CD14-positive monocyte (primary cell): ENCODE measurements at regions of chr1 and their contacts with region 1.

Region 1: GRCh38 chr1:66331657-66332547 is 202.1 kb upstream of the SGIP1 start:
- DNase-seq: peak; percentile 86 to 98 (median 96)
- H3K4me3 ChIP-seq: peak overlapping the region; percentile 80 to 99 (median 99)
- H3K4me3 Mint-ChIP-seq: peak overlapping the region; percentile 97 to 98
- H3K27ac ChIP-seq: peak overlapping the region; percentile 77 to 86
- H3K27ac Mint-ChIP-seq: peak overlapping the region; percentile 98 to 100 (median 98)
- H3K4me1 ChIP-seq: peaks cover 71 to 89% of the 10 kb centered on the region in 2 donors
- H3K4me1 Mint-ChIP-seq: peaks cover 68% of the 10 kb centered on the region
- H3K27me3 ChIP-seq: no peaks in the 10 kb centered on the region
- H3K27me3 Mint-ChIP-seq: no peaks in the 10 kb centered on the region
- CTCF ChIP-seq: no peak

Region 2: DNA sequence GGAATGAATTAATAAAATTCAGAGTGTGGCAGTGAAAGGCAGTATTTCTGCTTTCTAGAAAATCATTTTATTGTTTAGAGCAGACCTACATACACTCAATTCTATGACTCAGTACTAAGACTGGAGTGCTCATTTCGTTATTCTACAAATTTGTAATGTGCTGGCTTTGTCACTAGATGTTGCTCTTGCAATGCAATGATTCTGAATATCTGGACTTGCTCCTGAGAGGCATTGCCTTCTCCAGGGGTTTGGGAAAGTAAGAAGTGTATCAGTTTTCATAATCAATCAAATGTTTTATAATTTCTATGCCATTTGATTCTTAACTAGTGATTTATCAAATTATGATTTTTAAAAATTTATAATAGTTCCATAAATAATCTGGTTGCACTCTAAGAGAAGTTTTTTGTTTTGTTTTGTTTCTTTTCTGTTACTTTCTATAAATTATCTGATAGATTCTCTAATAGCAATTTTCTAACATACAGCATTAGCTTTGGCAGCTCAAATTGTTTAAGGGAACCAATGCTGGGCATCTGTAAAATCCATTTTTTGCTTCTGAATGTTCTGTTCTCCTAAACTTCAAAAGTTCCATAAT is 78.5 kb before region 1 on chr1:
- intact Hi-C with region 1: loop called (anchors 5 kb)
- DNase-seq: peak; percentile 57 to 80 (median 80)
- H3K4me3 ChIP-seq: no peak overlapping the region
- H3K4me3 Mint-ChIP-seq: no peak overlapping the region
- H3K27ac ChIP-seq: no peak overlapping the region
- H3K27ac Mint-ChIP-seq: peak overlapping the region in 3 of 7 donors; percentile 5 to 63 (median 27)
- H3K4me1 ChIP-seq: peaks cover 16 to 27% of the 10 kb centered on the region in 2 donors
- H3K4me1 Mint-ChIP-seq: peaks cover 26% of the 10 kb centered on the region
- H3K27me3 ChIP-seq: no peaks in the 10 kb centered on the region
- H3K27me3 Mint-ChIP-seq: no peaks in the 10 kb centered on the region
- CTCF ChIP-seq: peak; percentile 83

Region 3: GRCh38 chr1:66294692-66295384 is 37.1 kb before region 1 on chr1:
- intact Hi-C with region 1: loop called in 1 of 2 experiments (anchors 5 kb)
- DNase-seq: peak in 1 of 3 donors; percentile 55
- H3K4me3 ChIP-seq: no peak overlapping the region
- H3K4me3 Mint-ChIP-seq: no peak overlapping the region
- H3K27ac ChIP-seq: no peak overlapping the region
- H3K27ac Mint-ChIP-seq: no peak overlapping the region
- H3K4me1 ChIP-seq: peaks cover 16 to 18% of the 10 kb centered on the region in 2 donors
- H3K4me1 Mint-ChIP-seq: peaks cover 25% of the 10 kb centered on the region
- H3K27me3 ChIP-seq: no peaks in the 10 kb centered on the region
- H3K27me3 Mint-ChIP-seq: no peaks in the 10 kb centered on the region
- CTCF ChIP-seq: no peak

Region 4: GRCh38 chr1:66374561-66375111 is 42.7 kb after region 1 on chr1:
- intact Hi-C with region 1: loop called (anchors 5 kb)
- DNase-seq: peak; percentile 75 to 93 (median 76)
- H3K4me3 ChIP-seq: peak overlapping the region in 1 of 3 experiments; percentile 58
- H3K4me3 Mint-ChIP-seq: peak overlapping the region in 1 of 2 donors; percentile 65
- H3K27ac ChIP-seq: peak overlapping the region in 1 of 2 donors; percentile 81
- H3K27ac Mint-ChIP-seq: peak overlapping the region; percentile 84 to 96 (median 93)
- H3K4me1 ChIP-seq: peaks cover 69 to 84% of the 10 kb centered on the region in 2 donors
- H3K4me1 Mint-ChIP-seq: peaks cover 76% of the 10 kb centered on the region
- H3K27me3 ChIP-seq: no peaks in the 10 kb centered on the region
- H3K27me3 Mint-ChIP-seq: peaks cover 0 to 1% (median 0%) of the 10 kb centered on the region in 3 donors
- CTCF ChIP-seq: no peak

Region 5: GRCh38 chr1:66396212-66396890 is 64.4 kb after region 1 on chr1:
- intact Hi-C with region 1: loop called in 1 of 2 experiments (anchors 10 kb)
- DNase-seq: peak; percentile 78 to 92 (median 89)
- H3K4me3 ChIP-seq: peak overlapping the region in 1 of 3 experiments; percentile 47
- H3K4me3 Mint-ChIP-seq: peak overlapping the region; percentile 51 to 85
- H3K27ac ChIP-seq: peak overlapping the region; percentile 81 to 94
- H3K27ac Mint-ChIP-seq: peak overlapping the region; percentile 92 to 100 (median 99)
- H3K4me1 ChIP-seq: peaks cover 61 to 64% of the 10 kb centered on the region in 2 donors
- H3K4me1 Mint-ChIP-seq: peaks cover 74% of the 10 kb centered on the region
- H3K27me3 ChIP-seq: no peaks in the 10 kb centered on the region
- H3K27me3 Mint-ChIP-seq: no peaks in the 10 kb centered on the region
- CTCF ChIP-seq: no peak

Region 6: GRCh38 chr1:66436378-66437145 is 104.7 kb after region 1 on chr1:
- intact Hi-C with region 1: loop called in 1 of 2 experiments (anchors 5 kb)
- DNase-seq: peak in 2 of 3 donors; percentile 19 to 60
- H3K4me3 ChIP-seq: no peak overlapping the region
- H3K4me3 Mint-ChIP-seq: no peak overlapping the region
- H3K27ac ChIP-seq: no peak overlapping the region
- H3K27ac Mint-ChIP-seq: peak overlapping the region in 5 of 7 donors; percentile 20 to 76 (median 58)
- H3K4me1 ChIP-seq: peaks cover 31 to 40% of the 10 kb centered on the region in 2 donors
- H3K4me1 Mint-ChIP-seq: peaks cover 37% of the 10 kb centered on the region
- H3K27me3 ChIP-seq: no peaks in the 10 kb centered on the region
- H3K27me3 Mint-ChIP-seq: no peaks in the 10 kb centered on the region
- CTCF ChIP-seq: peak; percentile 16

Region 7: GRCh38 chr1:67685067-67685557 is 1353.2 kb after region 1 on chr1 and contains the start of gene GADD45A:
- intact Hi-C with region 1: loop called in 1 of 2 experiments (anchors 5 kb)
- DNase-seq: peak; percentile 96 to 97 (median 97)
- H3K4me3 ChIP-seq: peak within 1 kb of the TSS; percentile 74 to 92 (median 91)
- H3K4me3 Mint-ChIP-seq: peak within 1 kb of the TSS; percentile 88 to 91
- H3K27ac ChIP-seq: peak within 1 kb of the TSS; percentile 74 to 91
- H3K27ac Mint-ChIP-seq: peak within 1 kb of the TSS; percentile 78 to 92 (median 89)
- H3K4me1 ChIP-seq: peaks cover 52 to 66% of the 10 kb centered on the region in 2 donors
- H3K4me1 Mint-ChIP-seq: peaks cover 52% of the 10 kb centered on the region
- H3K27me3 ChIP-seq: no peaks in the 10 kb centered on the region
- H3K27me3 Mint-ChIP-seq: peaks cover 1 to 3% (median 2%) of the 10 kb centered on the region in 3 donors
- CTCF ChIP-seq: no peak
- polyA plus RNA-seq, gene GADD45A: 7.5 to 14.3 (median 9.6) TPM